Activated T-helper 1 cell treated with anti-CD3 and anti-CD28 coated beads, Interleukin-12 subunit alpha, Interleukin-12 subunit beta, Interleukin-2, Interleukin-4 antibody, amounts not matched to agents 30 ng/mL and 10 ng/mL and 1 ng/mL, durations not matched to agents 14 hours and 24 hours and 36 hours (primary cell): ENCODE measurements at regions of chr7 and their contacts with region 1.

Region 1: DNA sequence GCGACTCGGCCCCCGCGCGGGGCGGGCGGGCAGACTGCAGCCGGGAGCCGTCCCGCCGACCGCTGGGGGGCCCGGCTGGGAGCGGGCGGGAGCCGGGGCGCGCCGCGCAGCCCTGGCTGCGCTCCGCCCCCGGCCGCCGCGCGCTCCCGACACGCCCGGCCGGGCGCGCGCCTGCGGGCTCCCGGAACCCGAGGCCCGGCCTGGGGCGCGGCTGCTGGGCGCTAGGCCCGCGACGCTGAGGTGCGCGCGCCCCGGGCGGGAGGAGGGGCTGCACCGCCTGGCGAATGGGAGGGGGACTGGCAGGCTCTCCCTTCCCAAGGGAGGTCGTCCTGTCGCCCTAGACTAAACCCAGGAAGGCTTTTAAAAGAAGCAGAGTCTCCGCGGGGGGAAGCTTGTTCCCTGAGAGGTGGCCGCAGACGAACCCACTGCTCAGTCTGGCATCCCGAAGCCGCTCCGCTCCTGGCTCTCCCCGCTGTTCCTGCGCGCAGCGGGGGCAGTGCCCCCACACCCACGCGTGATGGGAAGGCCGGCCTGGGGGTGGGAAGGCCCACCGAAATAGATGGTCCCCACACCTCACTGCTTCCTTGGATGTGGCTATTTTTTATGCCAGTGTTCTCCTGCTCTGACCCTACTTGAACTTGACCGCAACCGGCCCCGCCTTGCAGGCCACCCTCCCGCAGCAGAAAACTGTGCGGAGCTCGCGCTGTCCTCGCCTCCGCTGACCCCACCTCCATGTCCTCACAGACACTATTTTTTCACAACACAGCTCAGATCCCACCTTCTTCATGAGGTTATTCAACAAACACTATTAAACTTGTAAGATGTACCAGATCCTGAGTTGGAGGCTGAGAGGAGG is at the start of gene VOPP1:
- DNase-seq: peak; percentile 57
- H3K4me3 Mint-ChIP-seq: peak within 1 kb of the TSS; percentile 94
- H3K27ac Mint-ChIP-seq: peak within 1 kb of the TSS; percentile 92
- H3K4me1 Mint-ChIP-seq: peaks cover 68% of the 10 kb centered on the region
- H3K27me3 Mint-ChIP-seq: no peaks in the 10 kb centered on the region
- total RNA-seq, gene VOPP1: 96.3 and 102 TPM in 2 replicates

Region 2: GRCh38 chr7:54995631-54996340 is 576.8 kb before region 1 on chr7:
- intact Hi-C with region 1: loop called (anchors 5 kb)
- DNase-seq: peak; percentile 32
- H3K4me3 Mint-ChIP-seq: peak overlapping the region; percentile 19
- H3K27ac Mint-ChIP-seq: peak overlapping the region; percentile 70
- H3K4me1 Mint-ChIP-seq: peaks cover 26% of the 10 kb centered on the region
- H3K27me3 Mint-ChIP-seq: peaks cover 10% of the 10 kb centered on the region

Region 3: DNA sequence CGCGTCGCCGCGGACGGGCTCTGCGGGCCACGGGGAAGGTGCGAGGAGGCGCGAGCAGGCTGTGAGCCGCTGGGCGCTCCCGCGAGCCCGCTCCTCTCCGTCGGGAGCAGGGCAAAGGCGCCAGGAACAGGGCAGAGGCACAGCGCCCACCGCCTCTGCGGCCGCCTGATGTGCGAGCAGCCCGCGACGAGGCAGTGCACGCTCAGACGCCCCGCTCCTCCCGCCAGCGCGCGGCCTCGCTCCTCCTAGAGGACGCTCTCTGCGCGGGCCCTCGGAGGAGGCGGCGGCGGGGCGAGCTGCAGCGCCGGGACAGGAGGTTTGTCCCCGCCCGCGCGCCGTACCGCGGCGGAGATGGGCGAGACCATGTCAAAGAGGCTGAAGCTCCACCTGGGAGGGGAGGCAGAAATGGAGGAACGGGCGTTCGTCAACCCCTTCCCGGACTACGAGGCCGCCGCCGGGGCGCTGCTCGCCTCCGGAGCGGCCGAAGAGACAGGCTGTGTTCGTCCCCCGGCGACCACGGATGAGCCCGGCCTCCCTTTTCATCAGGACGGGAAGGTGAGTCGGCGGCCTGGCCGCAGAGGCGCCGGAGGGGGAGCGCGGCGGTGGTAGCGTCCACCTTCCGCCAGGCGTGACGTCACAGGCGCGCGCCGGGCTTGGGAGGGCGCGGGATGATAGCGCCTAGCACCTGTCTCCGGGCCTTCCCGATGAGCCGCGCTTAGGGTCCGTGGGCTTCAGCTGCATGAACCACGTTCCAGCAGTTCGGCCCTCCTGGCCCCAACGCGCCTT is 206.7 kb before region 1 on chr7:
- intact Hi-C with region 1: loop called (anchors 1 kb)
- DNase-seq: peak; percentile 94
- H3K4me3 Mint-ChIP-seq: peak overlapping the region; percentile 98
- H3K27ac Mint-ChIP-seq: peak overlapping the region; percentile 98
- H3K4me1 Mint-ChIP-seq: peaks cover 19% of the 10 kb centered on the region
- H3K27me3 Mint-ChIP-seq: peaks cover 8% of the 10 kb centered on the region

Region 4: GRCh38 chr7:55509322-55509721 is 63.3 kb before region 1 on chr7:
- intact Hi-C with region 1: loop called (anchors 2 kb)
- DNase-seq: no peak
- H3K4me3 Mint-ChIP-seq: no peak overlapping the region
- H3K27ac Mint-ChIP-seq: peak overlapping the region; percentile 64
- H3K4me1 Mint-ChIP-seq: peaks cover 76% of the 10 kb centered on the region
- H3K27me3 Mint-ChIP-seq: no peaks in the 10 kb centered on the region

Region 5: DNA sequence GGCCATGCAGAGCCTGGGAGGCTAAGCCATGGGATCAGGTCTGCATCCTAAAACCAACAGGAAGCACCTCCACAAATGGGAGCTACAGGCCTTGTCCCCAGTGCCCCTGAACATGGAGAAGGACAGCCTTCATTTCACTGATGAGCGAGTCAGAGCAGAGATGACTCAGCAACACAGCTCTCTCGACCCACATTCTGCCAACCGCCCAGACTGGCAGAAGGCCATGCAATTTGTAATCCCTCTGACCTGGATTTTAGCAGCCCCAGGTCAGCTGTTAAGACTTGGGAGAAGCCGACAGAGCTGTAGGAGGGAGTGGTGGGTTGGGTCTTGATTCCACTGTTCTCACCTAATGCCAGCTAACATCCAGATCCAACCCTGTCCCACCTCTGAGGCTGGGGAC is 25.8 kb before region 1 on chr7:
- intact Hi-C with region 1: no loop called
- DNase-seq: no peak
- H3K4me3 Mint-ChIP-seq: no peak overlapping the region
- H3K27ac Mint-ChIP-seq: peak overlapping the region; percentile 34
- H3K4me1 Mint-ChIP-seq: peaks cover 88% of the 10 kb centered on the region
- H3K27me3 Mint-ChIP-seq: no peaks in the 10 kb centered on the region

Region 6: GRCh38 chr7:55593515-55594318 is 21.1 kb after region 1 on chr7:
- intact Hi-C with region 1: loop called (anchors 1 kb)
- DNase-seq: peak; percentile 48
- H3K4me3 Mint-ChIP-seq: no peak overlapping the region
- H3K27ac Mint-ChIP-seq: no peak overlapping the region
- H3K4me1 Mint-ChIP-seq: peaks cover 32% of the 10 kb centered on the region
- H3K27me3 Mint-ChIP-seq: peaks cover 4% of the 10 kb centered on the region

Region 7: DNA sequence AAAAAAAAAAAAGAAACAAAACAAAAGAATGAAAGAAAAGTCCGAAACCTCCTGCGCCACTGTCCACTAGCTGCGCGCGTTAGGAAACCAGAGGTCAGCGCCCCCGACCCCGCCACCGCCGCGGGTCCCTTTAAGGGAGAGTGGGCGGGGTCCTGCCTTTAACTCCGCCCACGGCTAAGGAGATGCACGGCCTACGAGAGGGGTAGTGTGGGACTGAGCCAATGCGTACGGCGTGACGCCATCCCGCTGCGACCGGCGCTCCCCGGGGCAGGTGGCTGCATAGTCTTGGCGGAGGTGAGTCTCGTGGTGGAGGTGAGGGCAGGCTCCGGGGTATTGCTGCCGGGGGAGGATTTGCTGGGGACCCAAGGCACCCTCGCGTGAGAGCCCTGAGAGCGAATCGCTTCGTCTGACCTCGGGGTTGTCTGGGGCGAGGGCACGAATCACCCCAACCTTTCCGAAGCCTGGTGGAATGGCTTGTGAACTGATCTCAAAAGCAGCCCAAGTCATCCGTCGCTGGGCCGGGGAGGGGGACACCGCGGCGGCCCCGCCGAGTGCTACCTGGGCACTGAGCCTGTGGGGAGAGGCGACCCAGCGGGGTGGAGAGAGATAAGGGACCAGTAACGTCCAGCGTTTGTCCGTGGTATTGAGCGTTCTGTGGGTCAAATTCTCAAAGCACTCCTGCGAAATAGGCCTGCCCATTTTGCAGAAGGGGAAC is 379.2 kb after region 1 on chr7 and contains the start of gene MRPS17:
- intact Hi-C with region 1: loop called (anchors 5 kb)
- DNase-seq: peak; percentile 92
- H3K4me3 Mint-ChIP-seq: peak within 1 kb of the TSS; percentile 92
- H3K27ac Mint-ChIP-seq: peak within 1 kb of the TSS; percentile 92
- H3K4me1 Mint-ChIP-seq: peaks cover 10% of the 10 kb centered on the region
- H3K27me3 Mint-ChIP-seq: no peaks in the 10 kb centered on the region
- total RNA-seq, gene MRPS17: 38.2 and 39.3 TPM in 2 replicates